GM12878 (cell line): ENCODE measurements at regions of chr16 and their contacts with region 1.

Region 1: DNA sequence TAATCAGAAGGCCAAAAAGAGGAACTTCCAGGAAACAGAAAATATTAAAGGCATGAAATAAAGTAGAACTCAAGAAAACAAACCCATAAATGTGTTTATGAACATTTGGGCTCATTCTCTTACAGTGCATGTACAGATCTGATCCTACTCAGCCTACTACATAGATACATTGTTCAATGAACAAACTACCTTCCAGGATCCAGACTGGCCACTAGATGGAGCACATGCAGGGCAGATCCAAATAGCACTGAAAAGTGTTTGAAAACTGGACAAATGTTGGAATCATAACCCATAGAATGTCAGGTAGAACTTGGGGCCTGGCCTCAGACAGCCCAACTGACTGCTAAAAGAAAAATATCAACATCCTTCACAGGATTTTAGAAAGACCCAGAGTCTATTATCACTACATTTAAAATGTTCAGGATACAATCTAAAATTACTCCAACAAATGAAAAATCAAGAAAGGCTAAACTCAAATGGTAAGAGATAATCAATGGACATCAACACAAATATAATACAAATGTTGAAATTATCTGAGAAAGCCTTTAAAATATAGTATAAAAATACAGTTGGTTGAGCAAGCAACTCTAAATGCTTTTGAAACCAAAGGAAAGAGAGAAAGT is 122.4 kb upstream of the NUDT7 start:
- DNase-seq: no peak
- ATAC-seq: peak; percentile 81
- H3K4me3 ChIP-seq: no peak overlapping the region
- H3K27ac ChIP-seq: no peak overlapping the region
- H3K4me1 ChIP-seq: no peaks in the 10 kb centered on the region
- H3K27me3 ChIP-seq: no peaks in the 10 kb centered on the region; a peak in 1 of 4 replicates
- CTCF ChIP-seq: peak; percentile 61 to 84 (median 84)
- EP300 ChIP-seq: no peak
- POLR2A ChIP-seq: no peak
- RAD21 ChIP-seq: peak; percentile 49

Region 2: GRCh38 chr16:77637940-77638339 is 38.0 kb after region 1 on chr16:
- CTCF ChIA-PET with region 1: no interaction called
- POLR2A ChIA-PET with region 1: no interaction called
- RAD21 ChIA-PET with region 1: no interaction called
- SMC1A ChIA-PET with region 1: no interaction called
- in situ Hi-C with region 1: no loop called
- intact Hi-C with region 1: no loop called
- DNase-seq: no peak
- ATAC-seq: no peak
- H3K4me3 ChIP-seq: no peak overlapping the region
- H3K27ac ChIP-seq: no peak overlapping the region
- H3K4me1 ChIP-seq: no peaks in the 10 kb centered on the region
- H3K27me3 ChIP-seq: no peaks in the 10 kb centered on the region
- CTCF ChIP-seq: no peak
- EP300 ChIP-seq: no peak
- POLR2A ChIP-seq: no peak
- RAD21 ChIP-seq: no peak

Region 3: GRCh38 chr16:77759821-77760220 is 159.9 kb after region 1 on chr16:
- CTCF ChIA-PET with region 1: no interaction called
- POLR2A ChIA-PET with region 1: no interaction called
- RAD21 ChIA-PET with region 1: no interaction called
- SMC1A ChIA-PET with region 1: no interaction called
- in situ Hi-C with region 1: no loop called
- intact Hi-C with region 1: no loop called
- DNase-seq: no peak
- ATAC-seq: no peak
- H3K4me3 ChIP-seq: no peak overlapping the region
- H3K27ac ChIP-seq: no peak overlapping the region
- H3K4me1 ChIP-seq: no peaks in the 10 kb centered on the region
- H3K27me3 ChIP-seq: no peaks in the 10 kb centered on the region
- CTCF ChIP-seq: no peak
- EP300 ChIP-seq: no peak
- POLR2A ChIP-seq: no peak
- RAD21 ChIP-seq: no peak

Region 4: DNA sequence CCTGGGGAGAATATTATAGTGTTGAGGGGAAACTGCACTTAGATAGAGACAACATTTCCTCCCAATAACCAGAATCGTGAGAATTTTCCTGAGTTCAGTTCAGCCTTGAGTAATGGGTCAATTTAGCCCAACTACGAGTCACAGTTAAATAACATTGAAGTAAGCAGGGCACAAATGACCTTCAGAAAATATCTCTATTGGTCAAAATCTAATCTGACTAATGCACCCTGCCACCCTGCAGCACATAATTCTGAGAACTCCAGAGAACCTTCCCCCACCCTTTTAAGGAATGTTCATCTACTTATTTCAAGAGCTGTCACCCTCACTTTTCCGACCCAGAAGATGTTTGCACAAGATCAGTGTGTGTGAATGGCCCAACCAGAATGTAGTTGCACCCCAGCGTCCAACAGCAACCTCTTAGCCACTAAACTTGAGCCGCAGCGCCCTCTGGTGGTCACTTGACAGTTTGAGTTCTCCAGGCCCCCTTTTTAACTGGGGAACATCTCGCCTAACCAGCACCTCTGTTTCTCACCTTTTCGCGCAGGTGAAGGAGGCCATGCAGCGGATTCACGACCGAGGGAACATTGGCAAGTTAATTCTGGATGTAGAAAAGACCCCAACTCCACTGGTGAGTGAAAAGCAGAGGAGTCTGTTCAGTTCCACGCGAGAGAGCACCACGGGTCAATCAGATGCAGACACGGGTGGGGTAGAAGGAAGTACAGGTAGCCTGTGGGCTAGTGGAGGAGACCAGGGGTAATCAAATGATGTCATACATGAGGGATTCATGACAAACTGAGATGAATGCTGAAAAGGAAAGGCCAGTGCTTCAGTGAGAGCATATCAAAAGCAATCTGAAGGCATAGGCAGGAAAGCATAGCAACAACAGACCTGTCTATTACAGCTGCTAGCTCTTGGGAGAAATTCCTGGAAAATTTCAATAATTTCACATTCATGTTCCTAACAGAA is 371.7 kb after region 1 on chr16:
- CTCF ChIA-PET with region 1: no interaction called
- POLR2A ChIA-PET with region 1: no interaction called
- RAD21 ChIA-PET with region 1: no interaction called
- SMC1A ChIA-PET with region 1: no interaction called
- in situ Hi-C with region 1: no loop called
- intact Hi-C with region 1: loop called (anchors 10 kb)
- DNase-seq: no peak
- ATAC-seq: peak; percentile 95
- H3K4me3 ChIP-seq: no peak overlapping the region
- H3K27ac ChIP-seq: no peak overlapping the region
- H3K4me1 ChIP-seq: no peaks in the 10 kb centered on the region
- H3K27me3 ChIP-seq: no peaks in the 10 kb centered on the region
- CTCF ChIP-seq: peak; percentile 68 to 90 (median 76)
- EP300 ChIP-seq: no peak
- POLR2A ChIP-seq: no peak
- RAD21 ChIP-seq: peak; percentile 96